Heart left ventricle (tissue), 16 donors: ENCODE measurements at regions of chr12 and their contacts with region 1.

Region 1: GRCh38 chr12:52865090-52865944 is 16.5 kb upstream of the KRT78 start:
- DNase-seq: peak; percentile 43 to 77 (median 61)
- ATAC-seq: peak in 3 of 4 donors; percentile 59 to 75 (median 62)
- H3K4me3 ChIP-seq: no peak overlapping the region
- H3K27ac ChIP-seq: no peak overlapping the region
- H3K4me1 ChIP-seq: peaks cover 0 to 5% (median 0%) of the 10 kb centered on the region in 12 donors
- H3K27me3 ChIP-seq: no peaks in the 10 kb centered on the region
- CTCF ChIP-seq: peak; percentile 56 to 80 (median 73)
- POLR2A ChIP-seq: no peak

Region 2: GRCh38 chr12:52667511-52667910 is 197.8 kb before region 1 on chr12:
- intact Hi-C with region 1: loop called in 3 of 10 experiments (anchors 5 to 10 kb)
- DNase-seq: no peak
- ATAC-seq: no peak
- H3K4me3 ChIP-seq: no peak overlapping the region
- H3K27ac ChIP-seq: no peak overlapping the region
- H3K4me1 ChIP-seq: no peaks in the 10 kb centered on the region
- H3K27me3 ChIP-seq: peaks cover 0 to 32% (median 4%) of the 10 kb centered on the region in 9 donors
- CTCF ChIP-seq: peak in 9 of 12 donors; percentile 9 to 33 (median 18)
- POLR2A ChIP-seq: no peak

Region 3: DNA sequence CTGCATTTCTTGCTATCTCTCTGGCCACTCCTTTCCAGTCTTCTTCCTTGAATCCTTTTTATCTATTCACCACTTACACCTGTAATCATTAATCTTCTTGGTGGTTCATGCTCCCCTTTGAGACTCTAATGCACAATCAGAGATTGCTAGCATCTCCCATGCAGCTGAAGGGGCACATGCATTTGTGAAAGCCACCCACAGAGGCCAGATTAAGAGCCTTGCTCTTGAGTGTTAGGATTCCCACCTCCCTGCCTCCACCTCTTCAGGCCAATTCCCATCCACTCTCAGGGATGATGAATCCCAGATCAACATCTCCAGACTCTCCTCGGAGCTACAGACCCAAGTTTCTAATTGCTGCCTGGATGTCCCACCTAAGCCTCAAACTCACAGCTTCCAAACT is 64.2 kb after region 1 on chr12:
- intact Hi-C with region 1: no loop called
- DNase-seq: no peak
- ATAC-seq: no peak
- H3K4me3 ChIP-seq: no peak overlapping the region
- H3K27ac ChIP-seq: no peak overlapping the region
- H3K4me1 ChIP-seq: peaks cover 0 to 33% (median 12%) of the 10 kb centered on the region in 12 donors
- H3K27me3 ChIP-seq: no peaks in the 10 kb centered on the region
- CTCF ChIP-seq: no peak
- POLR2A ChIP-seq: no peak